Heart right ventricle (tissue), 16 donors: ENCODE measurements at regions of chr5 and their contacts with region 1.

Region 1: DNA sequence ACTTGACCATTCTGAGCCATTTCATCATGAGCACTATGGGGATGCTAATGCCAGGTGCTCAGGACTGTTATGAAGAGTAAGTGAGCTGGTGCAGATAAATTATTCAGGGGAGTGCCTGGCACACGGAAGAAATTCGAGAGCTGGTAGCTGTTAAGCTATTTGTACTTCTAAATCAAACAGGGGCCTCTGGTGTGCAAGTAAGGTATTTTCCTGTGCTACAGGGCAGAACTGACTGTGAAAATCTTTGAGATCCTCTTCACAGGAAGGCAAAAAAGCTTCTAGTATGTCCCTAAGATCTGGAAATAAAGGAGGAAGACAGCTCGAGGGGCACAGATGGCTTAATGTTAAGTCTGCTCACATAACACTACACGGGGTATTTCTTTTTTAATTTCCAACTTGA is 106.3 kb upstream of the SPOCK1 start:
- DNase-seq: no peak
- ATAC-seq: peak in 3 of 8 donors; percentile 42 to 60 (median 59)
- H3K4me3 ChIP-seq: no peak overlapping the region
- H3K27ac ChIP-seq: no peak overlapping the region
- H3K4me1 ChIP-seq: no peaks in the 10 kb centered on the region
- H3K27me3 ChIP-seq: peaks cover 0 to 36% (median 0%) of the 10 kb centered on the region in 7 donors
- CTCF ChIP-seq: peak in 5 of 9 donors; percentile 17 to 43 (median 34)

Region 2: DNA sequence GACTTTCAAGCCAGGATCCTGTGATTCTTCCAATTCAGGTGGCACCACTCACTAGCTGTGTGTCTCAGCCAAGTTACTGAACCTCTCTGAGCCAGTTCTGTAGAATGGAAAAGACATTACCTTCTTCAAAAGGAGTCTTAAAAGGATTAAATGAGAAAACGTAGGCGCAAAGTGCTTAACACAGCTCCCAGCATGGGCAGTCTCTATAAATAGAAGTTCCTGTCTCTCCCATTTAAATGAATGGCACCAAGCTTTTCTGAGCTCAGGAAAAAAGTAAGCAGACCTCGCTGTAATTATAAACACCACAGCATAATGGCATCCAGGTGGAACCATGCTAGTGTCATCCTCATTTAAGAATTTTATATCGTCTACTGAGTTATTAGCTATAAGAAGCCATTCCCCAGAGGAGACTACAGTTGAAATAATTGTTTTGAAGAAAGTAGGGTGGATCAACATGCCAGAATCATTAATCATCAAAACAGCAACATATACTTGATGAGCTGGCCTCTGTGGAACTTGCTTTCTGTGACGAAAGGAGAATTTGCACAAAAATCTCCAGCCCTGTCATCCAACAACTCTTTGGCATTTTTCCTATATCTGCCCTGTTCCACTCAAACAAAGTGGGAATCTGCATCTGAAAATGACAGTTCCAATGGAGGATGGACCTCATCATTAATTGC is 295.2 kb before region 1 on chr5:
- intact Hi-C with region 1: loop called in 1 of 10 experiments (anchors 10 kb)
- DNase-seq: no peak
- ATAC-seq: peak in 2 of 8 donors; percentile 9 to 36
- H3K4me3 ChIP-seq: no peak overlapping the region
- H3K27ac ChIP-seq: peak overlapping the region in 1 of 10 donors; percentile 10
- H3K4me1 ChIP-seq: peaks cover 0 to 30% (median 10%) of the 10 kb centered on the region in 9 donors
- H3K27me3 ChIP-seq: no peaks in the 10 kb centered on the region
- CTCF ChIP-seq: no peak

Region 3: DNA sequence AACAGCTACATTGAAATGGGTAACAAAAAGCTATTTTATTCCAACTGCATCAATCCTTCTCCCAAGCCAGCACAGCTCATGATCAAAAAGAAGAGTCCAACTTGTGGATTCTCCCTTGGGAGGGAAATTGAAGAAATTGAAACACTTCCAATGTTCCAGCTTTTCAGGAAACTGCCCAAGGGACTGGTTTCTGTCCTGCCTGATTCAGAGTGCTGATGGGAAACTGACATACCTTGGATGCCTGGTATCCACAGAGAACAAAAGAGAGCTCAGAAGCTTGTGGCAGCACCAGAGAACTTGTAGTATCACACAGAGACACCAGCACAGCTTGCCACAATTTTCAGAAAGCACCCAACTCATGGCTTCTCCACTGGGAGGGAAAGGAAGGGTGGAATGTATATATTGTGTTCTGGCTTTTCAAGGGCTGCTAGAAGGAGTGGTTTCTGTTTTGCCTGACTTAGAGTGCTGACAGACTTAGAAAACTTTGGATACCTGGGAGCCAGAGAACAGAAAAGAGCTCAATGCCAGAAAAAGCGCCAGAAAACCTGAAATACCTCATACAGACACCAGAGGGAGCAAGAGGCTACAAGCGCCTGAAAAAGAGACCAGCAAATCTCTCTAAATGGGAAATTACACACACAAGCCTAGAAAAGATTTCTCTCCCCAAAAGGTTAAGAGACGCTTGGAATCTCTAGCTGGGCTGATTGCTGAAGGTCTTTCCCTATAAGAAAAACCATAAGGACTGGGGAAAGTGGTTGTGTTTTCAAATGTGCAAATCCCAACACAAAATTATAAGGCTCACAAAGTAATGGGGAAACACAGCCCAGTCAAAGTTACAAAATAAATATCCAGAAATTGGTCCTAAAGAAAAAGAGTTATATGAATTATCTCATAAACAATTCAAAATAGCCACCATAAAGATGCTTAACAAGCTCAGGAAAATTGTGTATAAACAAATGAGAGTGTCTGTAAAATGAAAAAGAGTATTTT is 285.1 kb before region 1 on chr5:
- intact Hi-C with region 1: loop called in 2 of 10 experiments (anchors 10 kb)
- DNase-seq: peak in 1 of 2 donors; percentile 26
- ATAC-seq: peak in 7 of 8 donors; percentile 28 to 59 (median 49)
- H3K4me3 ChIP-seq: no peak overlapping the region
- H3K27ac ChIP-seq: no peak overlapping the region
- H3K4me1 ChIP-seq: peaks cover 0 to 23% (median 11%) of the 10 kb centered on the region in 9 donors
- H3K27me3 ChIP-seq: peaks cover 0 to 8% (median 0%) of the 10 kb centered on the region in 7 donors
- CTCF ChIP-seq: peak; percentile 58 to 86 (median 83)

Region 4: DNA sequence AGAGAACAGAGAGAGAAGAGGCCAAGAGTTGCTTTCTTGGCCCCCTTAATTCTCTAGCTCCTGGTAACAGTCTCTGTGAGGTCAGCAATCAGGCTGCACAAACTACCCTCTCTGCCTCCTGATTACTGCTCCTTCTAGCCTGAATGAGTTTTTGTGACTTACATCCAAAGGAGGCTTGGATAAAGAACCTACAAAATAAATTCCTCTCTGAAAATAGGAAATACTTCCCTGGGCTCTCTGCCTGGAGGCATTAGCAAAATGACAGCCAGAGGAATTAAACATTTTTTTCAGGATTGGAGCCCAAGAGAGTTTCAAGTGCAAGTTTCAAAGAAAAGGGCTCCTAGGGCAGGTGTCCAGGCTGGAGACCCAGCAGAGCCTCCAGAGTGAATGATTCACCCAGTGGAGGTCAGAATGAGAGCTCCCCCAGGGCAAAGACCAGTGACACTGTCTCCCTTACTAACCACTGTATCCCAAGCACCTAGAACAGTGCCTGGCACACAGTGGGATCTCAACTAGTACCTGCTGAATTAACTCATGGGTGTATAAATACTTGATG is 268.8 kb before region 1 on chr5:
- intact Hi-C with region 1: loop called in 2 of 10 experiments (anchors 5 to 10 kb)
- DNase-seq: no peak
- ATAC-seq: no peak
- H3K4me3 ChIP-seq: no peak overlapping the region
- H3K27ac ChIP-seq: no peak overlapping the region
- H3K4me1 ChIP-seq: peaks cover 0 to 25% (median 0%) of the 10 kb centered on the region in 9 donors
- H3K27me3 ChIP-seq: no peaks in the 10 kb centered on the region
- CTCF ChIP-seq: no peak

Region 5: GRCh38 chr5:137344723-137345322 is 260.6 kb before region 1 on chr5:
- intact Hi-C with region 1: loop called in 1 of 10 experiments (anchors 10 kb)
- DNase-seq: peak in 1 of 2 donors; percentile 17
- ATAC-seq: peak in 2 of 8 donors; percentile 20 to 22
- H3K4me3 ChIP-seq: no peak overlapping the region
- H3K27ac ChIP-seq: no peak overlapping the region
- H3K4me1 ChIP-seq: peaks cover 0 to 31% (median 12%) of the 10 kb centered on the region in 9 donors
- H3K27me3 ChIP-seq: no peaks in the 10 kb centered on the region
- CTCF ChIP-seq: peak in 8 of 9 donors; percentile 52 to 73 (median 61)

Region 6: GRCh38 chr5:137837491-137838389 is 232.3 kb after region 1 on chr5:
- intact Hi-C with region 1: no loop called
- DNase-seq: no peak
- ATAC-seq: peak in 6 of 8 donors; percentile 3 to 64 (median 40)
- H3K4me3 ChIP-seq: no peak overlapping the region
- H3K27ac ChIP-seq: peak overlapping the region; percentile 69 to 92 (median 86)
- H3K4me1 ChIP-seq: peaks cover 3 to 70% (median 27%) of the 10 kb centered on the region in 9 donors
- H3K27me3 ChIP-seq: no peaks in the 10 kb centered on the region
- CTCF ChIP-seq: no peak